ENCODE measurements at regions of chr14 and their contacts with region 1.

Region 1: GRCh38 chr14:39015360-39015961 is 87.6 kb downstream of the SEC23A start:
- DNase-seq: peak in 5 of 9 donors; percentile 3 to 15 (median 13)
- ATAC-seq: peak; percentile 45
- H3K4me3 ChIP-seq: no peak overlapping the region
- H3K4me3 Mint-ChIP-seq: no peak overlapping the region
- H3K27ac ChIP-seq: no peak overlapping the region
- H3K27ac Mint-ChIP-seq: no peak overlapping the region
- H3K4me1 ChIP-seq: no peaks in the 10 kb centered on the region
- H3K4me1 Mint-ChIP-seq: peaks cover 0 to 3% (median 0%) of the 10 kb centered on the region in 7 donors
- H3K27me3 ChIP-seq: no peaks in the 10 kb centered on the region
- H3K27me3 Mint-ChIP-seq: no peaks in the 10 kb centered on the region

Region 2: DNA sequence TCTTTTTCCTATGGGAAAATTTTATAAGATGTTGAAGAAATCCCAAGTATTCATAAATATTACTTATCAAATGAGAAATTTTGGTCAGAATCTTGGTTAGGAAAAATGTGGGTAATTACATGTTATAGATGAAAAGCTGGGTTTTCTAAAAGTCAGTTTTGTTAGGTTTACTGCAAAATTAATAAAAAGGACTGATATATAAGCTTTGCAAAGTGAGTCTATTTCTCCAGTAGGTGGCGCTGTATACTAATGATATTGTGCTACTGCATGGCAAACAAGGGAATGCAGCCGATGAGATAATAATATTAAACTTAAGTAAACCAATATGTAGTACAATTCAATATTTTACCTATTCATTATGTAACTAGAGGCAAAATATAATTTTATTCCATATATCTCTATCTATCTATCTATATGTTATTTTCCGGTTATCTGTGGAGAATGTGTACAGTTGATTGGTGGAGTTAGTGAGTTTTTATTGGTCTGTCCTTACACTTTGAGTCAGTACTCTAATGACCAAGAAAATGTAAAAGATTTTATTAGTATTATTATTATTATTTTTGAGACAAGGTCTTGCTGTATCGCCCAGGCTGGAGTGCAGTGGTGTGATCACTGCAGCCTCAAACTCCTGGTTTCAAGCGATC is 1784.8 kb before region 1 on chr14:
- CTCF ChIA-PET with region 1: no interaction called
- POLR2A ChIA-PET with region 1: no interaction called
- intact Hi-C with region 1: loop called in 1 of 2 experiments (anchors 5 kb)
- DNase-seq: peak in 5 of 9 donors; percentile 3 to 34 (median 5)
- ATAC-seq: no peak
- H3K4me3 ChIP-seq: no peak overlapping the region
- H3K4me3 Mint-ChIP-seq: no peak overlapping the region
- H3K27ac ChIP-seq: no peak overlapping the region
- H3K27ac Mint-ChIP-seq: no peak overlapping the region
- H3K4me1 ChIP-seq: no peaks in the 10 kb centered on the region
- H3K4me1 Mint-ChIP-seq: no peaks in the 10 kb centered on the region
- H3K27me3 ChIP-seq: no peaks in the 10 kb centered on the region
- H3K27me3 Mint-ChIP-seq: peaks cover 0 to 4% (median 0%) of the 10 kb centered on the region in 5 donors

Region 3: DNA sequence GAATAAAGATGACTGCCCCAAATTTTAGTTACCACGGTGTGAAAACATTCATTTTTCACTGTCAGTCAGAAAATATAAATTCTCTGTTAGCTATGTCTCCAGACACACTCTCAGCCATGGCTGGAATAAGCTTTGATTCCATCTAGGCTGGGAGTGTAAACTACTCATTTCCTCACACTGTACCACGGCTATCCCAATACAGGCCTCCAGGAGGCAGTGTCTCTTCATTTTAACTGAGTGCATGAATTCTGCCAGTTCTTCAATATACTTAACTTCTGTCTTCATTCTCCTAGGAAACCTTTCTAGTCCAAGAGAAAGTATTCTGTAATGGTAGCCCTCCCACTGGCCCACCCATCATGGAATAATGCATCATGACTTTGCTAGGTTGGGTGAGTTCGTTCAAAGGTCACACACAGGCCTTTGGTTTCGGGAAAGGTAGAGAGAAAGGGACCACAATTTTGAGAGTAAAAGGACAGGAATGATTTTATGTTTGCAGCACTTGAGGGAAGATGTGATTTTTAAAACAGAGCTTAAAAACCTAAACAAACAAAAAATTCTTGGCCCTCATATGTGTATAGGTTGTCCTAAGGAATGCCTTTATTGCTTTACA is 293.5 kb before region 1 on chr14:
- CTCF ChIA-PET with region 1: no interaction called
- POLR2A ChIA-PET with region 1: no interaction called
- intact Hi-C with region 1: loop called (anchors 2 to 5 kb)
- DNase-seq: peak in 1 of 9 donors; percentile 2
- ATAC-seq: peak; percentile 70
- H3K4me3 ChIP-seq: no peak overlapping the region
- H3K4me3 Mint-ChIP-seq: no peak overlapping the region
- H3K27ac ChIP-seq: no peak overlapping the region
- H3K27ac Mint-ChIP-seq: no peak overlapping the region
- H3K4me1 ChIP-seq: no peaks in the 10 kb centered on the region
- H3K4me1 Mint-ChIP-seq: no peaks in the 10 kb centered on the region
- H3K27me3 ChIP-seq: no peaks in the 10 kb centered on the region
- H3K27me3 Mint-ChIP-seq: no peaks in the 10 kb centered on the region

Region 4: GRCh38 chr14:39342768-39343167 is 327.3 kb after region 1 on chr14:
- CTCF ChIA-PET with region 1: no interaction called
- POLR2A ChIA-PET with region 1: no interaction called
- intact Hi-C with region 1: no loop called
- DNase-seq: no peak
- ATAC-seq: no peak
- H3K4me3 ChIP-seq: no peak overlapping the region
- H3K4me3 Mint-ChIP-seq: peak overlapping the region in 1 of 10 donors; percentile 42
- H3K27ac ChIP-seq: no peak overlapping the region
- H3K27ac Mint-ChIP-seq: no peak overlapping the region
- H3K4me1 ChIP-seq: no peaks in the 10 kb centered on the region
- H3K4me1 Mint-ChIP-seq: peaks cover 9 to 29% (median 18%) of the 10 kb centered on the region in 7 donors
- H3K27me3 ChIP-seq: no peaks in the 10 kb centered on the region
- H3K27me3 Mint-ChIP-seq: no peaks in the 10 kb centered on the region